ENCODE measurements at regions of chr6 and their contacts with region 1.

Region 1: GRCh38 chr6:34248727-34249551 is at the start of gene SMIM29:
- DNase-seq: peak; percentile 95 to 97
- H3K4me3 ChIP-seq: peak within 1 kb of the TSS; percentile 72
- H3K4me1 ChIP-seq: peaks cover 20% of the 10 kb centered on the region
- H3K27me3 ChIP-seq: no peaks in the 10 kb centered on the region

Region 2: DNA sequence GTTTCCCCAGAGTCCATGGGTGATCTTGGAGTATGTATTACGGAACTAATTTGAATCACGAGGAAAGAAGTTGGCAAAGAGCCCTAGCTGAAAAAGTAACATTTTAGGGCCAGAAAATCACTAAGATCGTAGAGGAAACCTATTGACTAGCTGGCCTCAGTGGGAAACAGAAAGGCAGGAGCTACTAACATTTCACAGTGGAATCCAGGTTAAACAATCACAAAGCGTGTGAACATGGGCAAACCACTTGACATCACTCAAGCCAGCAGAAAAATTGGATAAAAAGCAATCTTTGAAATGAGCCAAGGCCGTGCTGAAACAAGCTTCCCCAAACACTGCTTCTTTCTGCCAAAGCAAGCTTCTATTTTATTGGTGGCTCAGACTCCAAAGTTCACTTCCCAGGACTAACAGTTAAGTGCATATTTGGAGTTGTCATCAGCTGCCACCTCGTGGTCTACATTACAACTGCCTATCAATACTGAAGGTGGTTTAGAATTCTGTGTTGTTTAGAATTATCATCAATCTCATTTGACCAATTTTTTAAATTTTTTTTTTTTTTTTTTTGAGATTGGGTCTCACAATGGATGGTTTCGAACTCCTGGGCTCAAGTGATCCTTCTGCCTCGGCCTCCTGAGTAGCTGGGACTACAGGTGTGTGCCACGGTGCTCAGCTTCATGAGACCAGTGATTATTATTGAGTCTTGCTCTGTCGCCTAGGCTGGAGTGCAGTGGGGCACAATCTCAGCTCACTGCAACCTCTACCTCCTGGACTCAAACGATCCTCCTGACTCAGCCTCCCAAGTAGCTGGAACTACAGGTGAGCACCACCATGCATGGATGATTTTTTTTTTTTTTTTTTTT is 166.3 kb after region 1 on chr6:
- in situ Hi-C with region 1: loop called (anchors 5 kb)
- DNase-seq: peak; percentile 52
- H3K4me3 ChIP-seq: no peak overlapping the region
- H3K4me1 ChIP-seq: peaks cover 11% of the 10 kb centered on the region
- H3K27me3 ChIP-seq: no peaks in the 10 kb centered on the region